A549 (cell line): ENCODE measurements at regions of chr11 and their contacts with region 1.

Region 1: DNA sequence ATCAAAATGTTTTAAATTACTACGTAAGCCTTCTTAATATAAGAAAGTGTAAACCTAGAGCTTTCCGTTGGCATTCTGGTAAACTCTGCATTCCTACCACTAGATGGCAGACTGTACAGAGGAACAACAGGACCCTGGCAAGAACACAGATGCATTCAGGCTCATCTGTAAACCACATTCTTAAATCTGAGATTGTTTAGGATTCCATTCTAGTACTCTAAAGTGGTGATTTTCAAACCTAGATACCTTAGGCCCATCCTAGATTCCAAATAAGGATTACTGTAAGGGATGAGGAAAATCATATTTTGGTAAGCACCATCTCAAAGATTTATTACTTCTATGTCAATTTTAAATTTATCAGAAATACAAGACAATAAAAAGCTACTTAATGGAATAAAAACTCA is 26.9 kb downstream of the PICALM start:
- DNase-seq: peak; percentile 63 to 85
- ATAC-seq: peak; percentile 85 to 90
- H3K4me3 ChIP-seq: no peak overlapping the region
- H3K27ac ChIP-seq: no peak overlapping the region
- H3K4me1 ChIP-seq: peaks cover 34% of the 10 kb centered on the region
- CTCF ChIP-seq: peak; percentile 97
- EP300 ChIP-seq: no peak
- POLR2A ChIP-seq: no peak
- RAD21 ChIP-seq: peak; percentile 84 to 85

Region 2: GRCh38 chr11:85672105-85672902 is 369.7 kb before region 1 on chr11:
- CTCF ChIA-PET with region 1: no interaction called
- POLR2A ChIA-PET with region 1: no interaction called
- DNase-seq: no peak
- ATAC-seq: no peak
- H3K4me3 ChIP-seq: no peak overlapping the region
- H3K27ac ChIP-seq: no peak overlapping the region
- H3K4me1 ChIP-seq: no peaks in the 10 kb centered on the region
- CTCF ChIP-seq: no peak
- EP300 ChIP-seq: no peak
- POLR2A ChIP-seq: no peak
- RAD21 ChIP-seq: no peak

Region 3: DNA sequence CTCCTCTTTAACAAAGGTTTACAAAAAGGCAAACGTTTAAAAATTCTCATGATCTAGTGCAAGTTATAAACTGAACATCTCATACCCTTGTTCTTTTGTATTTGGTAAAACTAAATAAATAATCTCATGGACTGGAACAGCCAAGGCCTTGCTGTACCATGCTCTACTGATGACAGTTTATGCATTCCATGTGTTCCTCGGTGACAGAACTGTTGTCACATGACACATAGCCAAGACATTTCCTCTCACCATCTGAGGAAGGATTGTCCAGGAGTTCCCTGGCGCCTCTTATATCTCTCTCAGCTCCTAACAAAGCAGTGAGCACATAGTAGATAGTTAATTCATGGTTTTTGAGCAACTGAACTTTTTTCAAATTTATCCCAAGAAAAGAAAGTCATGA is 174.2 kb before region 1 on chr11:
- CTCF ChIA-PET with region 1: no interaction called
- POLR2A ChIA-PET with region 1: no interaction called
- DNase-seq: no peak
- ATAC-seq: no peak
- H3K4me3 ChIP-seq: no peak overlapping the region
- H3K27ac ChIP-seq: no peak overlapping the region
- H3K4me1 ChIP-seq: no peaks in the 10 kb centered on the region
- CTCF ChIP-seq: no peak
- EP300 ChIP-seq: no peak
- POLR2A ChIP-seq: no peak
- RAD21 ChIP-seq: no peak

Region 4: DNA sequence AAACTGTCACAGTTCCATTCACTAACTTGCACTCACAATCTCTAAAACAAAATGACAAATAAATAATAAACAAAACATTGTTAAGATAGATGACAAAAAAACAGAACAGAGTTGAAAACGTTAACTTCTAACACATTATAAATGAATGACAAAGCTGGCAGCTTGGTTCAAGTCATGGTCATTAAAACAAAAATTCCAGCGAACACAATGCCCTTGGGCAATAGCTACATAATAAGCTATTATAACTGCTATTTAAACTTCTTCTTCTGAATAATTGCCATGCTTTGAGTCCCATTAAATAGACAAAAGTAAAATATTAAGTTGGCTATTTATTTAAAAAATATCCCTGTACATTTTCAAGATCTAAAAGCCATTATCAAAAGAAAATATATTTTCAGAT is 27.8 kb before region 1 on chr11:
- CTCF ChIA-PET with region 1: interaction called, 10 read pairs
- POLR2A ChIA-PET with region 1: no interaction called
- DNase-seq: no peak
- ATAC-seq: no peak
- H3K4me3 ChIP-seq: no peak overlapping the region
- H3K27ac ChIP-seq: no peak overlapping the region
- H3K4me1 ChIP-seq: no peaks in the 10 kb centered on the region
- CTCF ChIP-seq: no peak
- EP300 ChIP-seq: no peak
- POLR2A ChIP-seq: no peak
- RAD21 ChIP-seq: no peak

Region 5: GRCh38 chr11:86052693-86053641 is 11.0 kb after region 1 on chr11:
- CTCF ChIA-PET with region 1: interaction called, 25 read pairs
- POLR2A ChIA-PET with region 1: no interaction called
- DNase-seq: no peak
- ATAC-seq: no peak
- H3K4me3 ChIP-seq: no peak overlapping the region
- H3K27ac ChIP-seq: no peak overlapping the region
- H3K4me1 ChIP-seq: peaks cover 7% of the 10 kb centered on the region; the same call in 1 of the 3 replicates
- CTCF ChIP-seq: no peak
- EP300 ChIP-seq: no peak
- POLR2A ChIP-seq: no peak
- RAD21 ChIP-seq: no peak

Region 6: GRCh38 chr11:86068951-86069407 is 27.0 kb after region 1 on chr11 and contains the start of gene PICALM:
- CTCF ChIA-PET with region 1: interaction called, 20 read pairs
- POLR2A ChIA-PET with region 1: interaction called, 3 read pairs
- DNase-seq: peak; percentile 85 to 98
- ATAC-seq: peak; percentile 85 to 91
- H3K4me3 ChIP-seq: peak within 1 kb of the TSS; percentile 81
- H3K27ac ChIP-seq: peak within 1 kb of the TSS; percentile 91 to 98
- H3K4me1 ChIP-seq: peaks cover 35% of the 10 kb centered on the region
- CTCF ChIP-seq: no peak
- EP300 ChIP-seq: no peak
- POLR2A ChIP-seq: peak; percentile 66
- RAD21 ChIP-seq: peak in 1 of 2 experiments; percentile 23; a peak in 1 of 5 replicates
- polyA plus RNA-seq, gene PICALM: 195 and 212 TPM in 2 replicates

Region 7: GRCh38 chr11:86193297-86194095 is 151.5 kb after region 1 on chr11:
- CTCF ChIA-PET with region 1: interaction called, 79 read pairs
- POLR2A ChIA-PET with region 1: no interaction called
- DNase-seq: peak; percentile 87 to 89
- ATAC-seq: peak; percentile 100
- H3K4me3 ChIP-seq: peak overlapping the region; percentile 29
- H3K27ac ChIP-seq: peak overlapping the region; percentile 50 to 81
- H3K4me1 ChIP-seq: peaks cover 15% of the 10 kb centered on the region; the same call in 2 of the 3 replicates
- CTCF ChIP-seq: peak; percentile 85
- EP300 ChIP-seq: no peak
- POLR2A ChIP-seq: no peak
- RAD21 ChIP-seq: peak; percentile 78 to 83

Region 8: DNA sequence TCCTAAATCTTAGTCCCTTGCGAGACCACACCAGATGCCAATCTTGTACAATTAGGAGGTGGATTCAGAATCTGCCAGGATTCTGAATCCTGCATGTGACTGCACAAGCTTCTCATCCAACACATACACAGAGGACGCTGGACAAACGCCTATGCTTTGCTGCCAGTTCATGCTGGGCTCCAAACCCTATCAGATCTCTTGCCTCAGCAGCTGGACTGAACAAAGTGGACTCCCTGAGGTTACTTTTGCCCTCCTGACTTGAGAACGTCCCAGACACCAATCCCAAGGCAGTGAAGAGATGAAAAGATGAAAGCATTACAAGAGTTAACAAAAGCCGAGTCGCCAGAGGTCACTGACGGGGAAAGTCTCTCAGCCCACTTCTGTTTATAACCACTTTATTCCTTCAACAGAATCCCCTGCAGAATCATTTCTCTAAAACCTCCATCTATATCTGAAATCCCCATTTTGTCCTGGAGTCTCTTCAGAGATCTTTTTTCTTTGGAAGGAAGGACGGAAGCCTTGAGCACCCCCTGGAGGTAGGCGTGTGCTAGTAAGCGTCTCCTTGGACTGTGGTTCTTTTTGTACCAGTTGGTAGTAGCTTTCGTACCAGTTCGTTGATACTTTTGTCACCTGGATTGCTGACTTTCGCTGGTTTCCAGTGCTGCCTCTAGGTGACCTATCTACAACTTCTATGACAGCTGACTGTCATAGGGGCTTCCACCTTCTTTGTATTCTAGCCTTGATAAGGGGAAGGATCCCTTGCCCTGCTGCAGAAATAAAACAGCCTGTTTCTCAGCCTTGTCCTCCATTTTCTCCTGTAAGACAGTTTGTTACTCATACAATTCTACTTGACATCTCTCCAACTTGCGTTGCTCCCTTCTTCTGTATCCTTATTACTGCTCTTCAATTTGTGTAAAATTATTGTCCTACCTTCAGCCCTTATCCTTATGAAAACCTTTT is 176.4 kb after region 1 on chr11:
- CTCF ChIA-PET with region 1: interaction called, 46 read pairs
- POLR2A ChIA-PET with region 1: no interaction called
- DNase-seq: peak; percentile 77 to 89
- ATAC-seq: peak; percentile 95 to 98
- H3K4me3 ChIP-seq: peak overlapping the region; percentile 22; the same call in 2 of the 3 replicates
- H3K27ac ChIP-seq: peak overlapping the region; percentile 12 to 42; a peak in 4 of 6 replicates
- H3K4me1 ChIP-seq: no peaks in the 10 kb centered on the region
- CTCF ChIP-seq: peak; percentile 84
- EP300 ChIP-seq: no peak
- POLR2A ChIP-seq: no peak
- RAD21 ChIP-seq: peak; percentile 80 to 90